Thyroid gland (tissue), 4 donors: ENCODE measurements at regions of chr1 and their contacts with region 1.

Region 1: DNA sequence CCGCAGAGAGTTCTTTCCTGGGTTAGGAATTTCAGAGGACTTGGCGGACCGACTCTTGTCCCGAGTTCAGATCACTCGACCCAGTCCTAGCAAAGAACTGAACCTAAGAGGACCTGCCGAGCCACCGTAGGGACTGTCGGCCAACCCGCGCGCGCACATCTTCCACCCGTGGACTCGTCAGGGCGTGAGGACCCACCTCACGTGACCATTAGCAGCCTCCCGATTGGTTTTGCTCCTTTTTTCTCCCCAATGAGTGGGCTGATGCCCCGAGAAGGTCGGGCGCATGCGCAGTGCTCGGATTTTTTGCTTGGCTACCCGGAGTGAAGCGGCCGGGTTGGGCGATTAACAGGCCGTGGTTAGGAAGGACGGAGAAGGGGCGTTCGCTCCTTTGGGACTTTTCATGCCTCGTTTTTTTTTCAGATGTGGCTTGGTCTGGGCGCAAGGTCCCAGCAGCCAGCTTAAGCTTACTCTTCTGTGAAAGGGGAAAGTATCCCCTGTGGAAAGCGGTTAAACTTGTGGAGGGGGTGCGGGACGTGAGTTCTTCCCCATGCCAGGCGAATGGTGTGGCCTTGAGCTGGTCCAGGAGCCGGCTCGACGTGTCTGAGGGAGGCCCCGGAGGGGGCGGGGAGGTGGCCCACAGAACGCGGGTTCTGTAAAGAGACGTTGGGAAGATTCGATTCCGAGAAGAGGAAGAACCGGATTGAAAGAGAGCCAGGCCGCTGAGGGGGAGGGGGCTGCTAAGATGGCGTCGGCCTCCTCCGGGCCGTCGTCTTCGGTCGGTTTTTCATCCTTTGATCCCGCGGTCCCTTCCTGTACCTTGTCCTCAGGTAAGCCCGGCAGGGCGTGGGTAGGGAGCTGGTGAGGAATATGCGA is at the start of gene PIP5K1A:
- DNase-seq: peak; percentile 98 to 99
- H3K4me3 ChIP-seq: peak within 1 kb of the TSS; percentile 12 to 89 (median 79)
- H3K27ac ChIP-seq: peak within 1 kb of the TSS; percentile 79 to 93 (median 92)
- H3K4me1 ChIP-seq: peaks cover 17 to 33% of the 10 kb centered on the region in 2 donors
- H3K27me3 ChIP-seq: no peaks in the 10 kb centered on the region
- CTCF ChIP-seq: no peak
- POLR2A ChIP-seq: peak; percentile 71 to 87
- total RNA-seq, gene PIP5K1A: 53.4 to 74.5 (median 57.8) TPM

Region 2: DNA sequence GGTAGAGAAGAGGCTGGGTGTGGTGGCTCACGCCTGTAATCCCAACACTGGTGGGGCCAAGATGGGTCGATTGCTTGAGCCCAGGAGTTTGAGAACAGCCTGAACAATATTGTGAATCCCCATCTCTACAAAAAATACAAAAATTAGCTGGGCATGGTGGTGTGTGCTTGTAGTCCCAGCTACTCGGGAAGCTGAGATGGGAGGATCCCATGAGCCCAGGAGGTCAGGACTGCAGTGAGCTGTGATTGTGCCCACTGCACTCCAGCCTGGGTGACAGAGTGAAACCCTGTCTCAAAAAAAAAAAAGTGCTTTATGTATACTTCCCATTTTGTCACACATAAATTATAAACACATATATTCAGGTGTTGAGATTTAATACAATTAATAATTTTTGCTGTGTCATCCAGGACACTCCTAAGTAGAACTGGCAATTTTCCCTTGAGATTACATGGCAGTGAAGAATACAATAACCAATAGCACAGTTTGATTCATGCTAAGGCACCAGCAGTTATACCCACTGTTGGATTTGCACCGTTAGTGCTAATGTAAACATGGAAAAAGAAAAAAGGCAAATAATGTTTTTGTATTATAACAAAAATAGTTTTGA is 112.4 kb before region 1 on chr1:
- intact Hi-C with region 1: no loop called
- DNase-seq: no peak
- H3K4me3 ChIP-seq: no peak overlapping the region
- H3K27ac ChIP-seq: no peak overlapping the region
- H3K4me1 ChIP-seq: no peaks in the 10 kb centered on the region
- H3K27me3 ChIP-seq: no peaks in the 10 kb centered on the region
- CTCF ChIP-seq: no peak
- POLR2A ChIP-seq: no peak

Region 3: DNA sequence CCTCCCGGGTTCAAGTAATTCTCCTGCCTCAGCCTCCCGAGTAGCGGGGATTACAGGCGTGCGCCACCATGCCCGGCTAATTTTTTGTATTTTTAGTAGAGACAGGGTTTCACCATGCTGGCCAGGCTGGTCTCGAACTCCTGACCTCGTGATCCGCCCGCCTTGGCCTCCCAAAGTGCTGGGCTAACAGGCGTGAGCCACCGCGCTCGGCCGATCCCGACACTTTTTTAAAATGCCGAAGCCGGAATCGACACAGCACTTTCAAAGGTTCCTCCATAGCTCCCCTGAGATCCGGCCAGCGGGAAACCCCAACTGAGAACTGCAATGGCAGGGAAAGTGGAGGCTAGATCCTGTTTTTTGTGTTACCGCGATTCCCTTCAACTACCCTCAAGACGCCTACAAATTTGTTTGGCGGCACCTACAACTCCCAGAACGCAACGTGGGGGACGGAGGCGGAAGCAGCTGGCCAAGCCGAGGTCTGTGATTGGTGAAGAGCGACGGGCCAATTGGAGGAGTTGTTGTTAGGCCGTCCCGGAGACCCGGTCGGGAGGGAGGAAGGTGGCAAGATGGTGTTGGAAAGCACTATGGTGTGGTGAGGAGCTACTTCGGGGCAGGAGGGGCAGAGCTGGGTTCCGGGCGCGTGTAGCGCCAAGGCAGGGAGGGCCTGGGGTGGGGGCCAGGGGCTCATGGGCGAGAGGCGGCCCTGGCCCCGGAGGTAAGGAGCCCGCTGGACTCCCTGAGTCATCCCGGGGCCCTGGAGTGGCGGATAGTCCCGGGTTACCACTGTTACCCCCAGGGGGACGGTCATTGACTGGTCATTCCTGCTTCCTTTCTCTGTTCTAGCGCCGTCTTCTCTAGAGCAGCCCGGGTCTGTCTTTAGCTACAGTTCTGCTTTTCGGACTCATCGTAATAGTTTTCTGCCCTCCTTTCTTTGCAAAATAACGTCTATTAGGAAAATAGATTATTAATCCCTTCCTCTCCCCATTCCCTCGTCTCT is 56.0 kb after region 1 on chr1 and contains the start of gene PSMD4:
- intact Hi-C with region 1: loop called (anchors 5 kb)
- DNase-seq: peak; percentile 94 to 96
- H3K4me3 ChIP-seq: peak within 1 kb of the TSS; percentile 8 to 96 (median 62)
- H3K27ac ChIP-seq: peak within 1 kb of the TSS; percentile 55 to 78 (median 74)
- H3K4me1 ChIP-seq: peaks cover 4 to 14% of the 10 kb centered on the region in 2 donors
- H3K27me3 ChIP-seq: no peaks in the 10 kb centered on the region
- CTCF ChIP-seq: no peak
- POLR2A ChIP-seq: peak in 1 of 2 donors; percentile 79
- total RNA-seq, gene PSMD4: 77.1 to 110 (median 96.5) TPM

Region 4: GRCh38 chr1:151352006-151352689 is 153.7 kb after region 1 on chr1:
- intact Hi-C with region 1: loop called (anchors 5 kb)
- DNase-seq: peak in 1 of 2 donors; percentile 29
- H3K4me3 ChIP-seq: no peak overlapping the region
- H3K27ac ChIP-seq: no peak overlapping the region
- H3K4me1 ChIP-seq: peaks cover 9 to 11% of the 10 kb centered on the region in 2 donors
- H3K27me3 ChIP-seq: no peaks in the 10 kb centered on the region
- CTCF ChIP-seq: no peak
- POLR2A ChIP-seq: no peak

Region 5: GRCh38 chr1:151465026-151465425 is 266.5 kb after region 1 on chr1:
- intact Hi-C with region 1: no loop called
- DNase-seq: no peak
- H3K4me3 ChIP-seq: no peak overlapping the region
- H3K27ac ChIP-seq: no peak overlapping the region
- H3K4me1 ChIP-seq: no peaks in the 10 kb centered on the region
- H3K27me3 ChIP-seq: no peaks in the 10 kb centered on the region
- CTCF ChIP-seq: no peak
- POLR2A ChIP-seq: no peak